ENCODE measurements at regions of chr10 and their contacts with region 1.

Region 1: DNA sequence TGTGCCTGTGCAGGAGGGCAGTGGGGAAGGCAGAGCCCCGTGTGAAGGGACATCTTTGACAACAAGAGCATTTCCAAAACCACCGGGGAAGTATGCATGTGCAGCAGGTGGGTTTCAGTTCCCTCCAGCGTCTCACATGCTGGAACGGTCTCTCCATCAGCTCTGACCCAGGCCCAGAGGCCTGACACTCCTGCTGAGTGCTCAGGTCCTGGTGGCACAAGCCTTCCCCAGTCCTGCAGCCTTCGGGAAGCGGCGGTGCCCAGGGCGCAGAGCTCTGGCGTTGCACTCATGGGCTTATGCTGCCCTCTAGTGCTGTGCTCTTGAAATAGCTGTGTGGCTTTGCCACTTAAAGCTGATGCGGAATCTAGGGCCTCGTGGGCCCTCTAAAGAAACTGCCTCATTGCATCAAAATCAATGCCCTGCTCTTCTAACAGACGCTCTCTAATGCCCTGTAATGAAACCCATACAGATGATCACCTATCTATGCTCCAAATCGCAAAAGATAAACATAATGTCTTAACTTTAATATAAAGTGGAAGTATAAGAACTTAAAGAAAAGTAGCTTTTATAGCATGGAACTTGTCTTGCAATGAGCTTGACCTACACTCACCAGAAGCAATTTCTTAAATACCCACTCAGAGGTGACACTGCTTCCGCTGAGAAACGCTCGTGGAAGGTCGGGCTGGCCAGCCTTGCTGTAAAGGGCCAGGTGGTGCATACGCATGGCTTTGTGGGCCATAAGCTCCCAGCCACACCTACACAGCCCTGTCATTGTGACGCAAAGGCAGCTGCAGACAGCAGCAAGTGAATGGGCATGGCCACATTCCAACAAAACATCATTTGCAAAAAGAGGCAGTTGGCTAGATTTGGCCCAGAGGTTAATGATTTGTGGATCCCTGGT is 38.6 kb downstream of the CLRN3 start:
- DNase-seq: peak; percentile 79
- H3K27ac ChIP-seq: no peak overlapping the region
- CTCF ChIP-seq: peak; percentile 90

Region 2: DNA sequence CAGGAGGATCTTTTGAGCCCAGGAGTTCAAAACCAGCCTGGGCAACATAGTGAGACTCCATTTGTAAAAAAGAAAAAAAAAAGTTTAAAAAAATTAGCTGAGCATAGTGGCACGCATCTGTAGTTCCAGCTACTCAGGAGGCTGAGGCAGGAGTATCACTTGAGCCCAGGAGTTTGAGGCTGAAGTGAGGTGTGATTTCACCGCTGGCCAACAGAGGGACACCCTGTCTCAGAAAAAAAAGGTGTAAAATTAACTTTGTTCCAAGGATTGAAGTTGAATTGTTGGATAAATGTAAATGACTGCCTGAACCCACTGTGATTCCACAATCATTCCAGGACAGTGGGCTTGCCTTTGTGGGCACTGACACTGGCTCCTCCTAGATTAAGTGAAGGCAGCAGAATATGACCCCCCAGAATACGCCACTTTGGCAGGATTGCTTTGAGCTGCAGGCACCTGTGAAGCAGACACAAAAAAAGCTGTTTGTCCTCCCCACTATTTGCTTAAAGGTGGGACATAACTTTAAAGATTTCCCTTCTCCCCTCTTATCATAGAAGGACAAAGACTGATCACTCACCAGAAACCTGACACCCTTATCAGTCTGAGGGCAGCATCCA is 174.4 kb before region 1 on chr10:
- CTCF ChIA-PET with region 1: interaction called, 13 read pairs
- POLR2A ChIA-PET with region 1: no interaction called
- DNase-seq: no peak
- H3K27ac ChIP-seq: no peak overlapping the region
- CTCF ChIP-seq: peak; percentile 44

Region 3: GRCh38 chr10:127774766-127775559 is 79.2 kb before region 1 on chr10:
- CTCF ChIA-PET with region 1: no interaction called
- POLR2A ChIA-PET with region 1: no interaction called
- DNase-seq: no peak
- H3K27ac ChIP-seq: no peak overlapping the region
- CTCF ChIP-seq: no peak

Region 4: DNA sequence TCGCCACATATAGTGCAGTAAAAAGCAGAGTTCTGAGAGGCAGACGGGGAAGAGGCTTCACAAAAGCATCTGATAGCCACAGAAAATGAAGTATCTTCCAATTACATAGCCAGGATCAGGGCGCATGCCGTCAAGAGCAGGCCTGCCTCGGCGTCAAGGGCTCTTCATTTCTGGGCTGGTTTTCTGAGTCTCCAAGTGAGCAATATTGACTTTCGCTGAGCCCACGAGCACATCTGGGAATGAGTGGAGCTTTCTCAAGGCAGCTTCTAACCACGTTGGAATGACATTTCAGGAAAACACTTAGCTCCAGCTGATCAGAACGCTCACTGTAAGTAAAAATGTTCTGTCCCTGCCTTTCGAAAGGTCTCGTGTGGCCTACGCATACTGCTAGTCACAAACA is 13.2 kb before region 1 on chr10:
- CTCF ChIA-PET with region 1: interaction called, 21 read pairs
- POLR2A ChIA-PET with region 1: no interaction called
- DNase-seq: no peak
- H3K27ac ChIP-seq: no peak overlapping the region
- CTCF ChIP-seq: no peak

Region 5: DNA sequence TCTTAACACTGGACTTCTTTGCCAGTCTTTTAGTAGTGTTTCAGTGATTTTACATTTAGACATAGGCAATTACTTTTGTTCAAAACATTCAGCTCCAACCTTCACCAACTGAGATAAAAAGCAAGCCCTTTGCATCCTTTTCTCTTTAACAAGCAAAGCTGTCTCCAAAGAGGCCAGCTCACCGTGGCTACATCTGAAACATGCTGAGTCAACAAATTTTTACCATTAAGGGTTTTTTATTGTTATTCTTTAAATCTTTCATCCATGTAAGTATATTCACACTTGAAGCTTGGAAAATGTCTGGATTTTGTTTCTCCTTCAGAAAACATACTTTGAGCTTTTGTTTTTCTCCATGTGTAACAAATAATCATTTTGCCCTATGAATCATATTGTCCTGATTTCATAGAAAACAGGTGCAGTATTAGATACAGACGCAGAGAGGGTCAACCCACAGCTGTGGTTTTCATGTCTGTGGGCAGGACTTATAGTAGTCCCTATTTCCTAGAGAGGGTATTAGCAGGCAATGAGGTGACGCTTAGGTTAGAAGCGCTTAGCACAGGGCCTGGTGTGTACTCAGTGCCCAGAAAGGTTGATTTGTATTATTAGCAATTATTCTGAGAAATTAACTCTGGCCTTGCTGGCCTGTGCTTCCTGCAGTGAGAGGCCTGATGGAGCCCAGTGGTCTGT is 172.6 kb after region 1 on chr10:
- CTCF ChIA-PET with region 1: no interaction called
- POLR2A ChIA-PET with region 1: no interaction called
- DNase-seq: no peak
- H3K27ac ChIP-seq: no peak overlapping the region
- CTCF ChIP-seq: no peak

Measured in RWPE1 (cell line).